H1 (cell line): ENCODE measurements at regions of chr1 and their contacts with region 1.

Region 1: GRCh38 chr1:74504125-74504932 is 8.1 kb downstream of the LRRC53 start:
- DNase-seq: peak in 1 of 2 experiments; percentile 80
- H3K4me3 ChIP-seq: no peak overlapping the region
- H3K27ac ChIP-seq: no peak overlapping the region
- H3K4me1 ChIP-seq: peaks cover 2 to 9% (median 4%) of the 10 kb centered on the region in 4 experiments; a peak in 4 of 7 replicates
- H3K27me3 ChIP-seq: no peaks in the 10 kb centered on the region
- CTCF ChIP-seq: peak; percentile 76 to 96 (median 77)
- EP300 ChIP-seq: no peak
- POLR2A ChIP-seq: no peak
- RAD21 ChIP-seq: peak; percentile 82 to 83

Region 2: DNA sequence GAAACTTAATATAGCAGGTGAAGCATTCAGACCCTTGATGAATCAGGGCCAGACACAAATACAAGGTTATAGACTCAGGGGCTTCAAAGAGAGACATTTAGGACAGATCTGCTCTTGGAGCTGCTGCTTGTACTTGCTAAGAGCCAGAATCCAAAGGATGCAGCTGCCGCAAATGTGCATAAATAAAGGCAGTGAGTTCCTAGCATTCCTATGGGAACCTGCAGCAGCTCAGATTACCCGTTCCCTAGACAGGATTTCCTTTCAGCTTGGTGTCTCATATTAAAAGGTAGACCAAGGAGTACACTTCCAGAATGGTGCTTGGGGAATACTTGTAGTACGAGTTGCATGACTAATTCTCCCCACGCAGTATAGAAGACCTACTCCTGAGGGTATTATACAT is 17.8 kb after region 1 on chr1:
- CTCF ChIA-PET with region 1: interaction called, 12 read pairs
- POLR2A ChIA-PET with region 1: interaction called, 3 read pairs
- DNase-seq: peak in 1 of 2 experiments; percentile 59
- H3K4me3 ChIP-seq: peak overlapping the region in 1 of 4 experiments; percentile 22; a peak in 1 of 8 replicates
- H3K27ac ChIP-seq: no peak overlapping the region
- H3K4me1 ChIP-seq: peaks cover 3 to 15% (median 8%) of the 10 kb centered on the region in 4 experiments; a peak in 6 of 7 replicates
- H3K27me3 ChIP-seq: no peaks in the 10 kb centered on the region
- CTCF ChIP-seq: no peak
- EP300 ChIP-seq: no peak; a peak in 1 of 3 replicates
- POLR2A ChIP-seq: no peak
- RAD21 ChIP-seq: no peak